PC-3 (cell line): ENCODE measurements at regions of chr5 and their contacts with region 1.

Region 1: GRCh38 chr5:159510282-159510681 is 180.0 kb upstream of the IL12B start:
- DNase-seq: peak; percentile 83
- ATAC-seq: peak; percentile 86
- H3K4me3 ChIP-seq: no peak overlapping the region
- H3K27ac ChIP-seq: peak overlapping the region; percentile 57
- H3K4me1 ChIP-seq: peaks cover 47% of the 10 kb centered on the region
- H3K27me3 ChIP-seq: no peaks in the 10 kb centered on the region
- CTCF ChIP-seq: no peak

Region 2: GRCh38 chr5:159331093-159331973 is 178.9 kb before region 1 on chr5:
- CTCF ChIA-PET with region 1: no interaction called
- POLR2A ChIA-PET with region 1: no interaction called
- intact Hi-C with region 1: loop called (anchors 5 kb)
- DNase-seq: peak; percentile 58
- ATAC-seq: peak; percentile 87
- H3K4me3 ChIP-seq: peak overlapping the region; percentile 72
- H3K27ac ChIP-seq: 0 out of 2 replicates have a peak overlapping the region, but pooled peaks have one; percentile 19
- H3K4me1 ChIP-seq: peaks cover 3% of the 10 kb centered on the region; the same call in 1 of the 2 replicates
- H3K27me3 ChIP-seq: no peaks in the 10 kb centered on the region
- CTCF ChIP-seq: peak; percentile 65

Region 3: GRCh38 chr5:159451197-159452052 is 58.9 kb before region 1 on chr5:
- CTCF ChIA-PET with region 1: interaction called, 3 read pairs
- POLR2A ChIA-PET with region 1: no interaction called
- intact Hi-C with region 1: loop called (anchors 1 kb)
- DNase-seq: peak; percentile 91
- ATAC-seq: peak; percentile 83
- H3K4me3 ChIP-seq: no peak overlapping the region
- H3K27ac ChIP-seq: peak overlapping the region; percentile 49
- H3K4me1 ChIP-seq: peaks cover 31% of the 10 kb centered on the region
- H3K27me3 ChIP-seq: no peaks in the 10 kb centered on the region
- CTCF ChIP-seq: no peak

Region 4: GRCh38 chr5:159463590-159464344 is 46.5 kb before region 1 on chr5:
- CTCF ChIA-PET with region 1: no interaction called
- POLR2A ChIA-PET with region 1: no interaction called
- intact Hi-C with region 1: loop called (anchors 2 kb)
- DNase-seq: peak; percentile 71
- ATAC-seq: peak; percentile 82
- H3K4me3 ChIP-seq: no peak overlapping the region
- H3K27ac ChIP-seq: no peak overlapping the region
- H3K4me1 ChIP-seq: peaks cover 33% of the 10 kb centered on the region
- H3K27me3 ChIP-seq: no peaks in the 10 kb centered on the region
- CTCF ChIP-seq: no peak

Region 5: DNA sequence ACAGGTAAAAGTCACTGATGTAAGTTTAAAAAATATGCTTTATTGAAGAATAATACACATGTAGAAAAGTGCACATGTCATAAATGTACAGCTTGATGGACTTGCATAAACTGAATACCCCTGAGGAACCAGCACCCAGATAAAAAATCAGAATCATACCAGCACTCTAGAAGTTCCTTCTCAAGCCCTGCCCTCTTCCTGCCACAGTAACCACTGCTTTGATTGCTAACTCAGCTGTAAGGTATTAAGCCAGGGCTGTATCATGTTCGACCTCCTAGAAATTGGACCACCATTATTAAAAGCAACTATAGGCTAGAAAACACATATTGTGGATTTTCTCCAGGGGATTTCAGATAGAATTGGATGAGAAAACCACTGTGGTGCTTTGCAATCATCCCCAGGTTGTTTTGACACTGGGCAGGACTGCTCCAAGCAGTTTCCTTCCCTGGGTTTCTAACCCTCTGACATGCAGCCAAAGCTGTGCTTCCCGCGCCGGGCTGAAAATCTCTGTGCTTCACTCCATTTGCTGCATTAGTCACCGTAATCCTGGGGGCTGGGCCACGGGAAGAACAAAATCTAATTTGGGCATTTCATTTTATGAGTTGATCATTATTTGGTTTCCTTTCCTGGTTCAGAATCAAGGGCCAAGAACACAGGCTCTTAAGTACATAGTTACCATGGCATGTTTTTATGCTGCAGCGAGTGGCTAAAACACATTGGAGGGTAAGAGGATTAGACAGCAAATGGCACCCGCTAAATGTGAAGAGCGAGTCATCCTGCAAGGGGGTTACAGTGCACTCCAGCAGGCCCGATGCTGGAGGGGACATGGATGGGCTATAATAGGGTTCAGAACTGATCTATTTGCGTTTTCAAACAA is 40.5 kb before region 1 on chr5:
- CTCF ChIA-PET with region 1: no interaction called
- POLR2A ChIA-PET with region 1: no interaction called
- intact Hi-C with region 1: loop called (anchors 1 kb)
- DNase-seq: peak; percentile 61
- ATAC-seq: peak; percentile 95
- H3K4me3 ChIP-seq: no peak overlapping the region
- H3K27ac ChIP-seq: peak overlapping the region; percentile 23; the same call in 1 of the 2 replicates
- H3K4me1 ChIP-seq: peaks cover 11% of the 10 kb centered on the region
- H3K27me3 ChIP-seq: no peaks in the 10 kb centered on the region
- CTCF ChIP-seq: no peak

Region 6: GRCh38 chr5:159616952-159617351 is 106.7 kb after region 1 on chr5:
- CTCF ChIA-PET with region 1: no interaction called
- POLR2A ChIA-PET with region 1: no interaction called
- intact Hi-C with region 1: no loop called
- DNase-seq: peak; percentile 51
- ATAC-seq: peak; percentile 70
- H3K4me3 ChIP-seq: no peak overlapping the region
- H3K27ac ChIP-seq: no peak overlapping the region
- H3K4me1 ChIP-seq: peaks cover 9% of the 10 kb centered on the region
- H3K27me3 ChIP-seq: no peaks in the 10 kb centered on the region
- CTCF ChIP-seq: no peak

Region 7: DNA sequence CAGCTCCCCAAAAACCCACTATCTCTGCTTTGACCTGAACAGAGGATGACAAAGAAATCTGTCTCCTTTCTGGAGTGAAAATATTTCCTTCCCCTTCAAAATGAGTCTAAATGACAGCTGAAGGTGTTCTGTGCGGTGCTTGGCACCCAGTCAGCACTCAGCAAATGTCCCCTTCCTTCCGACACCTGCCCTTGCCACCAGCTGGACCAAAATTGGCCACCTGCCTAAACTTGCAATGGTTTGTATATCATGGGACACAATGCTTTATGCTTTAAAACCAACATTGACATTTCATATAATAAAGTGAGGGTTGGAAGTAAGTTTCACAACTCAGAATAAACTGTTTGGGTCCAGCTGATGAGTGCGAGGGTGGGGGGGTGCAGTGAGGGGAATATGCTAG is 491.2 kb after region 1 on chr5:
- CTCF ChIA-PET with region 1: no interaction called
- POLR2A ChIA-PET with region 1: no interaction called
- intact Hi-C with region 1: no loop called
- DNase-seq: no peak
- ATAC-seq: no peak
- H3K4me3 ChIP-seq: no peak overlapping the region
- H3K27ac ChIP-seq: no peak overlapping the region
- H3K4me1 ChIP-seq: no peaks in the 10 kb centered on the region
- H3K27me3 ChIP-seq: no peaks in the 10 kb centered on the region; the same call in 1 of the 2 replicates
- CTCF ChIP-seq: no peak